Esophagus squamous epithelium (tissue), 5 donors: ENCODE measurements at regions of chr11 and their contacts with region 1.

Region 1: GRCh38 chr11:29333993-29334775 is 682.6 kb downstream of the KCNA4 start:
- DNase-seq: no peak
- H3K4me3 ChIP-seq: no peak overlapping the region
- H3K27ac ChIP-seq: no peak overlapping the region
- H3K4me1 ChIP-seq: no peaks in the 10 kb centered on the region
- H3K27me3 ChIP-seq: peaks cover 0 to 9% (median 0%) of the 10 kb centered on the region in 4 donors
- CTCF ChIP-seq: peak in 3 of 6 experiments; percentile 11 to 47 (median 35)
- POLR2A ChIP-seq: no peak

Region 2: DNA sequence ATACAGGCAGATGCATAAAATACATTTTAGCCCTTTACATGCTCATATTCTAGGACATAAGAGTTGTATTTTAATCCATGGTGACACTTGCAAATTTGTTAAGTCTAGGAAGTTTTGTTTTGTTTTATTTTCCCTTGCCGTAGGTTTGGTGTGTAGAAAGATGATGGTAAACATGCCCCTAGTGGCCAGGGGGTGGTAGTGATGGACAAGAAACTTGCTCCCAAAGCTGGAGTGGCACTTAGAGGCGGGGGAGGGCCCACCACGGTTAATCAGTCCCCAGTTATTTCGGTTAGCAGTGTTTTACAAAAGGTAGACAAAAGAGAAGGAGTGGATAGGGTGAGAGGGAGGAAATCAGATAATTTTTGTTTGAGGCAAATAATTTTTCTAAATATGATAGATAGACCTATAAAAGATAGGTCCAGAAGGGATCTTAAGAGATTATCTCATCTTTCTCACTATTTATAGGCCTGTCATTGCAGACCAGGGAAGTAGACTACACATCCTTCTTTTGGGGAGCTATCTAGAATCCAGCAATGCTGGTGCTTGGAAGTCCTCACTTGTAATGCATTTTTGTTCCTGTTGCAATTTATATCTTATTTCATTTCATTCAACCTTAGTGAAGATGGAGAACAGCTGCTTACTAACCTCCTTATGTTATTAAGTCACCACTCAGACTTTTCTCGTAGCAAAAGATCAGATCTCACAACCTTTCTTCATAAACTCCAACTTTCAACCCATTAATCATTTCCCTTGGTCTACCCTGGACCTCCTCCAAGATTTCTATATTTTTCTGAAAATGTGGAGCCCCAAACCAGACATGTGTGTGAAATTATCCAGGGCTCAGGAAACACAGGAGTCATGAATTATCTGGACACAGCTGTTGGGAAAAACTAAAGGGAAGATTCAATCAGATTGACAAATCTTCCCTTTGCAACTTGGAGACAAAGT is 1628.0 kb before region 1 on chr11:
- intact Hi-C with region 1: loop called (anchors 10 kb)
- DNase-seq: no peak
- H3K4me3 ChIP-seq: no peak overlapping the region
- H3K27ac ChIP-seq: no peak overlapping the region
- H3K4me1 ChIP-seq: peaks cover 0 to 8% (median 0%) of the 10 kb centered on the region in 3 donors
- H3K27me3 ChIP-seq: peaks cover 0 to 45% (median 0%) of the 10 kb centered on the region in 4 donors
- CTCF ChIP-seq: peak; percentile 32 to 55 (median 42)
- POLR2A ChIP-seq: no peak